Caco-2 (cell line): ENCODE measurements at regions of chr10 and their contacts with region 1.

Region 1: DNA sequence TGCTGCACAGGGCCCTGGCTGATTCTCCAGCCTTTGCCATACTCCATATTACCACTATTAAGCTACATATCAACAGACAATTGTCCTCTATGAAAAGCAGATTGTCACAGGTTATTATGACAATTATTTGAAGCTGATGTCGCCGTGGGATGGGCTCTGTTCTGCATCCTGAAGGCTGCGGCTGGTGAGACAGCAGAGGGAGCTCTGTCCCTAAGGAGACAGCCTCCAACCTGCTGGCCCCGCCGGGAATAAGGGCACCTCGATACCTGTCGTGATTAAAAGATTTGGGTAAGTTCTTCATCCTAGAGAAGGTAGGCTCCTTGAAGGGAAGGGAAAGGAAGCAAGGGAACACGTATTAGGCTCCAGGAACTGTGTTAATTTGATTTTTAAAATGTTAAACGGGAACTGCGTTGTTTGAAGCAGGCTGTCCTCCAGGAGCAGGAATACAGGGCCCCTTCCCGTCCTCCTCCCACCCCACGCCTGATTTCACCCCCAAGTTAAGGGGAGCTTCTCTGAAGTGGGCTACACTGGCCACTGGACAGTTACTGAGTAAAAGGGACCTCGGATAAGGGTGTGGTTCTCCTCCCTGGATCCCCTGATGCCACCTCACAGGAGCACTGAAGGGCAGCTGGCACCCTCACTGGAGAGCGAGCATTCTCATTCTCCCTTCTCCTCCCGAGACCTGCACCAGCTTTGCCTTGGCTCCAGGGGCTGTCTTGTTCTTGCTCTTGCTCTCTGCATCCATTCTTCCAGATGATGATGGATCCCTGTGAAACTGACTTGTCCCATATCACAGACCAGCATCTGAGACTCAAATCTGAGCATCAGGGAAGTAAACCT is 11.8 kb upstream of the TIAL1 start:
- DNase-seq: peak; percentile 68 to 74
- H3K4me3 ChIP-seq: peak overlapping the region; percentile 22; the same call in 1 of the 2 replicates
- H3K4me3 Mint-ChIP-seq: peak overlapping the region; percentile 67
- H3K27ac Mint-ChIP-seq: no peak overlapping the region
- H3K4me1 ChIP-seq: no peaks in the 10 kb centered on the region; the same call in 1 of the 2 replicates
- H3K4me1 Mint-ChIP-seq: peaks cover 12% of the 10 kb centered on the region
- H3K27me3 ChIP-seq: no peaks in the 10 kb centered on the region
- H3K27me3 Mint-ChIP-seq: no peaks in the 10 kb centered on the region
- CTCF ChIP-seq: peak; percentile 76 to 92

Region 2: DNA sequence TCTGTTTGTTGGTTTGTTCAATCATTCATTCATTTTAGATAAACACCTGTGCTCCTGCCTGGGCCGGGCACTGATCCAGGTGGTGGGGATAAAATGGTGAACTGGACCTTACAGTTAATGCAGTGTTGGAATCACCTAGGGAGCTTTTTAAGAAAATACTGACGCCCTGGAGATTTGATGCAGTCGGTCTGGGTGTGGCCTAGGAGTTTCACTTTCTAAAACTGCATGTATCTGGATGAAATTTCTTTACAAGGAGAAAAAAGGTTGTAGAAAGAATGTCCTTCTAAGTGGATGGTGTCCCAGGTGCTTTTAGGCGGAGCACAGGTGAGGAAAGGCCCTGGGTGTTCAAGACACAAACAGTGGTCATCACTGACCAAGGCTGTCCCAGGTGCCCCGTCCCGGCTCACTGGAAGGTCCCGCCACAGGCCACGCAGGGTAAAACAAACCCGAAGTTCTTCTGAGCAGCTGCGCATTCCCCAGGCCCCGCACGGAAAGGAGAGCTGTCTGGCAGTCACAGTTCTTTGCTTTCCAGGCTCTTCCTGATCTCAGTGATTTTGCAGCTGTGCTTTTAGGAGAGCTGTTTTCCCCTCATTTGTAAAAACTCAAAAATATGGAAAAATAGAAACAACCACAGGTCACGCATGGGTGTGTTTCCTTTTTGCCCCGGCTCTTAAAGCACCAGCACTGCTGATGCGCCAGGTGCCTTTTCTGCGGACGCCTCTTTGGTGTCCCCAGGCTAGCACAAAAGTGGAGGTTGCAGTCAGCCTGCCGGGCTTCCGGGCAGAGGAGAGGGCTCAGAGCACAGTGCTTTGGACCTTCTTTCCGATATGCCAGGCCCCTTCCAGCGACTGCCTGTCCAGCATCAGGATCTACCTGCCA is 239.3 kb before region 1 on chr10:
- CTCF ChIA-PET with region 1: no interaction called
- POLR2A ChIA-PET with region 1: no interaction called
- intact Hi-C with region 1: no loop called
- DNase-seq: no peak
- H3K4me3 ChIP-seq: no peak overlapping the region
- H3K4me3 Mint-ChIP-seq: no peak overlapping the region
- H3K27ac Mint-ChIP-seq: no peak overlapping the region
- H3K4me1 ChIP-seq: no peaks in the 10 kb centered on the region
- H3K4me1 Mint-ChIP-seq: no peaks in the 10 kb centered on the region
- H3K27me3 ChIP-seq: no peaks in the 10 kb centered on the region
- H3K27me3 Mint-ChIP-seq: no peaks in the 10 kb centered on the region
- CTCF ChIP-seq: no peak

Region 3: GRCh38 chr10:119650692-119651513 is 42.4 kb after region 1 on chr10 and contains the start of gene BAG3:
- CTCF ChIA-PET with region 1: interaction called, 6 read pairs
- POLR2A ChIA-PET with region 1: interaction called, 6 read pairs
- intact Hi-C with region 1: loop called (anchors 1 kb)
- DNase-seq: peak; percentile 90
- H3K4me3 ChIP-seq: peak within 1 kb of the TSS; percentile 78
- H3K4me3 Mint-ChIP-seq: peak within 1 kb of the TSS; percentile 90
- H3K27ac Mint-ChIP-seq: peak within 1 kb of the TSS; percentile 89
- H3K4me1 ChIP-seq: peaks cover 13% of the 10 kb centered on the region
- H3K4me1 Mint-ChIP-seq: peaks cover 13% of the 10 kb centered on the region
- H3K27me3 ChIP-seq: no peaks in the 10 kb centered on the region
- H3K27me3 Mint-ChIP-seq: no peaks in the 10 kb centered on the region
- CTCF ChIP-seq: no peak
- total RNA-seq, gene BAG3: 30.7 and 31.6 TPM in 2 replicates

Region 4: DNA sequence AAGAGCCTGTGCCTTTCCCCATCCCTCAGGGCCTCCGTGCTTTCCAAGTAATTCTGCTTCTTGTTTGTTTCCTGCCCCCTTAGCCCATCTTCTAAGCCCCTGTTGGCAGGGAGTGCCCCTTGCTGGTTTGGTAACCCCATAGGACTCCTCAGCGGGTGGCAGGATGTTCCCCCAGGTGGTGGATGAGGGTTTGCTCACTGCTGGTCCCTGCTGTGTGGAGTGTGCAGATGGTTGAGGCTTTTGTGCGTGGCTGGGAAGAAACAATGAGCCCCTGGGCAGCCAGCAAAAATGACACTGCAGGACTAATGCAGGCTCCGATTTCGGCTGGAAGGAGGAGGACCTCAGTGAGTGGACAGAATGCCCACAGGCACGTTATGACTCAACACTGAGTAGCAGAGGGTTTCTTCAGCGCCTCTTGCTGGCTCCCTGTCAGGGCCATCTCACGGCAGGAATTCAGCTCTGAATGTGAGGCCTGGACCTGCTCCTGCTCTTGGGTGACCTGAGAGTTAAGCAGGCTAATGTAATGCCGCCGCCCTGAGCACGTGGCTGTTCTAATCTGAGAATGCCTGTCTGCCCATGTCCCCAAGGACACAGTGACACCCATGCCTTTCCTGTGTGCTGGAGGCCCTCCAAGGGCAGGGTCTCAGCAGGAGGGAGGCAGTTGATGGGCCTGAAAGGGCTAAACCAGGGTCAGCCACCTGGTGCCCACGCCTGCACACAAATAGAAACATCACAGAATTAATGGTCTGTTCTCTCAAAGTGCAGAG is 59.2 kb after region 1 on chr10:
- CTCF ChIA-PET with region 1: no interaction called
- POLR2A ChIA-PET with region 1: no interaction called
- intact Hi-C with region 1: loop called (anchors 2 kb)
- DNase-seq: peak; percentile 32 to 60
- H3K4me3 ChIP-seq: no peak overlapping the region
- H3K4me3 Mint-ChIP-seq: no peak overlapping the region
- H3K27ac Mint-ChIP-seq: peak overlapping the region; percentile 94
- H3K4me1 ChIP-seq: peaks cover 49% of the 10 kb centered on the region
- H3K4me1 Mint-ChIP-seq: peaks cover 55% of the 10 kb centered on the region
- H3K27me3 ChIP-seq: no peaks in the 10 kb centered on the region
- H3K27me3 Mint-ChIP-seq: no peaks in the 10 kb centered on the region
- CTCF ChIP-seq: no peak

Region 5: GRCh38 chr10:119859420-119860258 is 251.1 kb after region 1 on chr10:
- CTCF ChIA-PET with region 1: interaction called, 4 read pairs
- POLR2A ChIA-PET with region 1: no interaction called
- intact Hi-C with region 1: loop called (anchors 1 kb)
- DNase-seq: peak in 1 of 2 experiments; percentile 34
- H3K4me3 ChIP-seq: no peak overlapping the region
- H3K4me3 Mint-ChIP-seq: no peak overlapping the region
- H3K27ac Mint-ChIP-seq: peak overlapping the region; percentile 45
- H3K4me1 ChIP-seq: peaks cover 14% of the 10 kb centered on the region; the same call in 1 of the 2 replicates
- H3K4me1 Mint-ChIP-seq: peaks cover 13% of the 10 kb centered on the region
- H3K27me3 ChIP-seq: no peaks in the 10 kb centered on the region
- H3K27me3 Mint-ChIP-seq: no peaks in the 10 kb centered on the region
- CTCF ChIP-seq: peak; percentile 44 to 45